Panc1 (cell line): ENCODE measurements at regions of chr2 and their contacts with region 1.

Region 1: GRCh38 chr2:100242891-100243619 is 79.2 kb downstream of the LONRF2 start:
- DNase-seq: peak; percentile 39
- ATAC-seq: peak; percentile 87
- H3K4me3 ChIP-seq: no peak overlapping the region
- H3K27ac ChIP-seq: no peak overlapping the region
- H3K4me1 ChIP-seq: no peaks in the 10 kb centered on the region
- H3K27me3 ChIP-seq: no peaks in the 10 kb centered on the region; the same call in 1 of the 2 replicates
- CTCF ChIP-seq: peak; percentile 89

Region 2: GRCh38 chr2:99725820-99726219 is 517.2 kb before region 1 on chr2:
- CTCF ChIA-PET with region 1: no interaction called
- POLR2A ChIA-PET with region 1: no interaction called
- in situ Hi-C with region 1: no loop called
- intact Hi-C with region 1: loop called (anchors 10 kb)
- DNase-seq: no peak
- ATAC-seq: no peak
- H3K4me3 ChIP-seq: no peak overlapping the region
- H3K27ac ChIP-seq: no peak overlapping the region
- H3K4me1 ChIP-seq: no peaks in the 10 kb centered on the region
- H3K27me3 ChIP-seq: peaks cover 2% of the 10 kb centered on the region; the same call in 1 of the 2 replicates
- CTCF ChIP-seq: no peak; the same call in 1 of the 2 replicates

Region 3: GRCh38 chr2:99786636-99787390 is 456.2 kb before region 1 on chr2:
- CTCF ChIA-PET with region 1: no interaction called
- POLR2A ChIA-PET with region 1: no interaction called
- in situ Hi-C with region 1: no loop called
- intact Hi-C with region 1: no loop called
- DNase-seq: no peak
- ATAC-seq: no peak
- H3K4me3 ChIP-seq: no peak overlapping the region
- H3K27ac ChIP-seq: no peak overlapping the region
- H3K4me1 ChIP-seq: no peaks in the 10 kb centered on the region
- H3K27me3 ChIP-seq: no peaks in the 10 kb centered on the region
- CTCF ChIP-seq: no peak

Region 4: DNA sequence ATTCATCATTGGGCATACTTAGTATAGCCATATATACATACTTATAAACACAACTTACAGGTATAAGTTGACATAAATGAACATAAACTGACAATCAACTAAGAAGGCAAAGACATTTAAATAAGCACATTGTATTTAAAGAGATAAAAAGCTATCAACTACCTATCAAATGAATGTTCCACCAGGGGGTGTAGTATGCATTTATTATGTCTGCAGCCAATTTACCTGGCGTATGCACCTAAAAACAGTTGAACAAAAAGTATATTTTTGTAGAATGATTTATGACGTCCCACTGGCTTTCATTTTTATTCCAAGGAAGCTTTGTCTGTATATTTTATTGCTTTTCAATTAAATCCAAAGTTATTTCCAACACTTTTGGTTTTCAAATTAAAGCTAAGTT is 424.2 kb before region 1 on chr2:
- CTCF ChIA-PET with region 1: no interaction called
- POLR2A ChIA-PET with region 1: no interaction called
- in situ Hi-C with region 1: no loop called
- intact Hi-C with region 1: loop called (anchors 2 kb)
- DNase-seq: no peak
- ATAC-seq: no peak
- H3K4me3 ChIP-seq: no peak overlapping the region
- H3K27ac ChIP-seq: no peak overlapping the region
- H3K4me1 ChIP-seq: no peaks in the 10 kb centered on the region
- H3K27me3 ChIP-seq: no peaks in the 10 kb centered on the region
- CTCF ChIP-seq: peak; percentile 4; the same call in 1 of the 2 replicates

Region 5: DNA sequence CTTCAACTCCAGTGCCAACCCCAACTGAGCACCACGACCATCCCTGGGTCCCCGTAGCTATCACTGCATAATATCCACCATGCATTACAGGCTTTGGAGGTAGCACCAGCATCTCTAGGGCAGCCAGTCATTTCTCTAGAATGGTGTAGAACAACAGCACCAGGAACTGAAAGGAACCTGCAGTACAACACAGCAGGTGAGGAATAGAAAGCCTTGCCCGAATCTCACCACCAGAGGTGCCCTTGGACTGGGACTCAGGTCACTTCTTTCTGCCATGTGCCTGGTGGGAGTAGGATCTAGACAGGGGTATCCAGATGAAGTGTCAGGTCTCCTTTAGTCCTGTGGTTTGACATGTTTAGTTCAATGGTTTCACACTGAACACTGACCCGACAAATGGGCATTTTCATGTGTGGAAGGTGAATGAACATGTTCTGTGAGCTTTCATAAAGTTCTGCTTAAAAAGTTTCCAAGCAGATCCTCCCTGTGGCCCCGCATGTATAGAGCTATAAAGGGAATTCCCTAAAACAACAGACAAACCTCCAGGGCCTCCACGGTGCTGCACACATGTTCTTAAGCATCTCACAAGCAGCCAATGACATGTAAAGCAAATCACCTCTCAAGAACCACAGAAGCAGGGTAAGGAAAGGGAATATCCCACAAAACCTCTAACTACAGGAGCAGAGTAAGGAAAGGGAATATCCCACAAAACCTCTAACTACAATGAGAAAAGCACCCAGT is 309.0 kb before region 1 on chr2:
- CTCF ChIA-PET with region 1: no interaction called
- POLR2A ChIA-PET with region 1: no interaction called
- in situ Hi-C with region 1: no loop called
- intact Hi-C with region 1: loop called (anchors 5 kb)
- DNase-seq: no peak
- ATAC-seq: no peak
- H3K4me3 ChIP-seq: no peak overlapping the region
- H3K27ac ChIP-seq: no peak overlapping the region
- H3K4me1 ChIP-seq: no peaks in the 10 kb centered on the region
- H3K27me3 ChIP-seq: peaks cover 4% of the 10 kb centered on the region; the same call in 1 of the 2 replicates
- CTCF ChIP-seq: 0 out of 2 replicates have a peak, but pooled peaks have one; percentile 2

Region 6: GRCh38 chr2:100002059-100002458 is 241.0 kb before region 1 on chr2:
- CTCF ChIA-PET with region 1: no interaction called
- POLR2A ChIA-PET with region 1: no interaction called
- in situ Hi-C with region 1: no loop called
- intact Hi-C with region 1: no loop called
- DNase-seq: no peak
- ATAC-seq: no peak
- H3K4me3 ChIP-seq: no peak overlapping the region
- H3K27ac ChIP-seq: no peak overlapping the region
- H3K4me1 ChIP-seq: no peaks in the 10 kb centered on the region
- H3K27me3 ChIP-seq: no peaks in the 10 kb centered on the region
- CTCF ChIP-seq: no peak